ENCODE measurements at regions of chr6 and their contacts with region 1.

Region 1: DNA sequence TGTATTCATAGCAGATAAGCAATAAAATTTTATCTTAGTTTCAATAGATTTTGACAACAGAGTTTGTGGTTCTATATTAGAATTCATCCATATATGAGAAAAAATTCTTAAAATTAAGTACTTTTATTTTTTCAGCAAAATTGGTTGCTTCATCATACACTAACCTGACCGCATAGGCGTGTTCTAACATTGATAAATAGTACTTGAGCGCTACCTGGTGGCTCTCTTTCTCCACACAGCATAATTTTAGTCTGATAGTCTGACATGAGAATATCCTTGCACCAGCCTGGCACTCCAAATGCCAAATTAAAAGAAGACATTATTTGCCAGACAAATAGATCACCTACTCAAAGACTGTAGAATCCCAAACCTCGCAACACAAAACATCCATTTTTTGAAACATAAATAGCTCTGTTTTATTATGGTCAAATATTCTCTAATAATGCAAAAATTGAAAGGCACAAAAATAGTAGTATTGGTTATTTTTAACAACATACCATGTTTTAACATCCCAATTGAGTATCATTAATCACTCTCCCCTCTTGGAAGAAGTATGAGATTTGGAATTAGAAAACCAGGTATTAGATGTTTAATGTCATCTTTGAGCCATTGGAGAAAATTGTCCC is 33.0 kb upstream of the FILIP1 start:
- DNase-seq: peak; percentile 2 to 79 (median 39)
- ATAC-seq: peak; percentile 82
- H3K4me3 ChIP-seq: no peak overlapping the region
- H3K4me3 Mint-ChIP-seq: no peak overlapping the region
- H3K27ac ChIP-seq: no peak overlapping the region
- H3K27ac Mint-ChIP-seq: no peak overlapping the region
- H3K4me1 ChIP-seq: no peaks in the 10 kb centered on the region
- H3K4me1 Mint-ChIP-seq: no peaks in the 10 kb centered on the region
- H3K27me3 ChIP-seq: peaks cover 0 to 16% of the 10 kb centered on the region in 2 experiments
- H3K27me3 Mint-ChIP-seq: peaks cover 52% of the 10 kb centered on the region
- CTCF ChIP-seq: peak; percentile 72

Region 2: DNA sequence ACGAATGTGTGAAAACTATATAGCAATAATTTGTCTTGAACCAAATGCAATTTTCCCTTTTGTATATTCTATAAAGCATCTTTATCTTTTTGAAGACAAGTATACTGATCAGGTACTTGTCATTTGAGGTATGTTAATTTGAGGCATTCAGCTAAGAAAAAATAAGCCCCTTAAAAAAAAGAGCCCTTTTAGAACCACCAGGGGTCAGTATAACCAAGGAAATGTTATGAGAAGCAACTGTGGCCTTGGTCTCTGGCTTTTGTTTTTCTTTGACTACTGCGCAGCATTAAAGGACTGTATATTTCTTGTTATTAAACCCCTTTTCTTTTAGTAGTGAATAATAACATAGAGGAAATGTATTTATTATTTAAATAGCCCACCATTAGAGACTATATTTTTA is 1787.5 kb before region 1 on chr6:
- CTCF ChIA-PET with region 1: no interaction called
- POLR2A ChIA-PET with region 1: no interaction called
- intact Hi-C with region 1: loop called (anchors 5 kb)
- DNase-seq: peak in 3 of 14 experiments; percentile 66 to 79 (median 78)
- ATAC-seq: peak; percentile 64
- H3K4me3 ChIP-seq: no peak overlapping the region
- H3K4me3 Mint-ChIP-seq: no peak overlapping the region
- H3K27ac ChIP-seq: no peak overlapping the region
- H3K27ac Mint-ChIP-seq: no peak overlapping the region
- H3K4me1 ChIP-seq: no peaks in the 10 kb centered on the region
- H3K4me1 Mint-ChIP-seq: no peaks in the 10 kb centered on the region
- H3K27me3 ChIP-seq: no peaks in the 10 kb centered on the region
- H3K27me3 Mint-ChIP-seq: no peaks in the 10 kb centered on the region
- CTCF ChIP-seq: peak; percentile 76

Region 3: GRCh38 chr6:75296811-75297779 is 229.5 kb before region 1 on chr6:
- CTCF ChIA-PET with region 1: interaction called, 4 read pairs
- POLR2A ChIA-PET with region 1: no interaction called
- intact Hi-C with region 1: loop called (anchors 1 to 2 kb)
- DNase-seq: peak in 3 of 14 experiments; percentile 67 to 79 (median 77)
- ATAC-seq: peak; percentile 73
- H3K4me3 ChIP-seq: no peak overlapping the region
- H3K4me3 Mint-ChIP-seq: no peak overlapping the region
- H3K27ac ChIP-seq: no peak overlapping the region
- H3K27ac Mint-ChIP-seq: no peak overlapping the region
- H3K4me1 ChIP-seq: no peaks in the 10 kb centered on the region
- H3K4me1 Mint-ChIP-seq: no peaks in the 10 kb centered on the region
- H3K27me3 ChIP-seq: no peaks in the 10 kb centered on the region
- H3K27me3 Mint-ChIP-seq: no peaks in the 10 kb centered on the region
- CTCF ChIP-seq: peak; percentile 82

Measured in CD4-positive, alpha-beta T cell (primary cell).